HEK293T (cell line): ENCODE measurements at regions of chr22 and their contacts with region 1.

Region 1: DNA sequence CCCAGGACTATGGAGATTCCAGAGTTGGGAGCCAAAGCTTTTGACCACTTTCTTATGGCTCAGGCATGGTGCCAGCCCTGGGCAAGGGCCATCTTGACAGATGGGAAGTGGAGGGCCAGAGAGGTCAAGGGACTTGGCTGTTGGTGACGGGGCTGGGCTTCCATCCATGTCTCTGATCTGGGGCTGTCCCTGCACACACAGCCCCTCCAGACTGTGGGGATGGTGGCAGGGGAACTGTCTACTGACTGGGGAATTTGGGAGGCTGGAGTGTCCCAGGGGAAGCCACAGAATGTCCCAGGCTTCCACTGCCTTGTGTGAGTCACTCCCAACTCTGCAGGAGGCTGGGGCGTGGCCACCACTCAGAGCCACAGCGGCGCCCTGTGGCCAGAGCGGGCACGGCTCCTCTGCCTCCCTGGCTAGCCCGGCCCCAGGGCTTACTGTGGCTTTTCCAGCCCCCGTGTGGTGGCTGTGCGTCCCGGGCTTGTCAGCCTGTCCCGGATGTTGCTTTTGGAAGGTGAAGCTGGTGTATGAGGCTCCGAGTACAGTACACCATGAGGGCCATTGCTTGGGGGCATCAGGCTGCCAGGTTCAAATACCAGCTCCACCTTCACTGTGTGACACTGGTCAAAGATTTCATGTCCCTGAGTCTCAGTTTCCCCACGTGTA is 19.6 kb downstream of the C22orf23 start:
- DNase-seq: peak; percentile 98

Region 2: DNA sequence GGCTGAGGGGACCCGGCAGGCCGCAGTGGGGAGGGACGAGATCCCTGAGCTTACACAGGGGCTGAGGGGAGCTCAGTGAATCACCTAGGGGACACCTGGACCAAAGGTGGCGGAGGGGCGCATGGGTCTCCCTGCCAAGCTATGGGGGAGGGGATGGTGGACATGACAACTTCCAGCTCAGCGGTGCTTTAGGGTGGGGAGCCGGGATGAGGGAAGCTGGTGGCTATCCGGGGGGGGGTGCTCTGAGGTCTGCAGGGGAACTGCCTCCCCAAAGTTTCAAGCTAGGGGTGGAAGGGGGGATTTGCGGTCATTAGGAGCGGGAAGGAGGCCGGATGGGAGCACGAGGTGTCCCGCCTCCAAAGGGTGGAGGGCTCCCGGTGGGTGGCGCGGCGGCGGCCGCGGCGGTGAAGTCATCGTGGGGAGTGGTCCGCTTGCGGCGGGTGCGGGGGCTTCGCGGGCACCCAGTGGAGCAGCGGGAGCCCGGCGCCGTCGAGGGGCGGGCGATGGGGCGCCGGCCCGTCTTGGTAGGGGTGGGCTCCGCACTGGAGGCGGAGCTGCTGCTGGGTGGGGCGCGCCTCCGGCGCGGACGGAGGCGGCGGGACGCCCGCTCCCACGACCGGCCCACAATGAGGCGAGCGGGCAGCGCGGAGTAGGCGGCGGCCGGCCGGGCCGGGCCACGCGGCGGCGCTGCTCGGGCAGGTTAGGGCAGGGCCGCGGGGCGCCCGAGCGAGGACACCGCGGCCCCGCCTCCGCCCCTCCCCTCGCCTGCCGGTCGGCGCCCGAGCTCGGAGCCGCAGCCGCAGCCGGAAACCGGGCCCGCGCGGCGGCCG is 28.1 kb before region 1 on chr22 and contains the start of gene MICALL1:
- CTCF ChIA-PET with region 1: interaction called, 4 read pairs
- POLR2A ChIA-PET with region 1: interaction called, 31 read pairs
- DNase-seq: peak; percentile 90